SK-N-SH (cell line): ENCODE measurements at regions of chr5 and their contacts with region 1.

Region 1: DNA sequence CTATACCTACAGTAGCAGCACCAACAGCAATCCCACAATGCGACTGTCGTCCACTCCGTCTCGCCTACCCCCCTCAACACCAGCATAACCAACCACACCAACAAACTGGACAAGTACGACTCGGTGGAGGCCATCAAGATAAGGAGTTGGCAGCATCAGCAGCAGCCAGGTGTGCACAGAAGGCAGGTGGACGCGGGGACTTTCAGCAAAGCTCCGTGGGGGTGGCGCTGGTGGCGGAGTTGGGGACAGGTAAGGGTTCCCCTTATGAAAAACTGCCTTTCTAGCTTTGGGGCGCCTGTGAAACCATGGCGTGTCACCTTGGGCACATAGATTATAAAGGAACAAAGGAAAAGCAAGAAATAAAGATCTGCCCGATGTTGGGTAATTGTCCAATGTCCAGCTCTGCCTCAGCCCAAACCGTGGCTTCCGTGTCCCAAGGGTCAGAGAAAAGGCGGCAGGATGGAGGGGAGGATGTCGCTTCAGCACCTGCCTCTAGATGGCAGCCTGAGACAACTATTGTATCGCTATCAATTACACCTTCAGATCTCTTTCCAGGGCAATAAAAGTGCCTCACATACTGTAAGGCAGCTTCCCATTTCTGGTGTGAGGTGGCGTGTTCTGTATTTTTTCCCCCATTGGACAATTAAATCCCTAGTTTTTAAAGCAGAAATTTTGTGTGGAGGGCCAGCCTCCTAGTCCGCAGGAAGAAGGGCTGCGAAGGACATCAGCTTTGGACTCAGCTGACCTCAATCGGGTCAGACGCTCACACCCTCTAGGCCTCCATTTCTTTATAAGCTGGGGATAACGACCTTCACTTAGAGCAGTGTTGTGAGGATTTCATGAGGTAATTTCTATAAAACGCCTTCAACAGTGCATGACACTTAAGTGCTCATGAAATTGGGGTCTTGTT is 58.8 kb downstream of the MTRR start:
- DNase-seq: peak; percentile 68
- H3K4me3 ChIP-seq: peak overlapping the region in 1 of 2 experiments; percentile 40; a peak in 1 of 4 replicates
- H3K27ac ChIP-seq: no peak overlapping the region
- H3K4me1 ChIP-seq: no peaks in the 10 kb centered on the region; a peak in 1 of 4 replicates
- H3K27me3 ChIP-seq: peaks cover 27% of the 10 kb centered on the region; the same call in 1 of the 2 replicates
- CTCF ChIP-seq: peak; percentile 79
- EP300 ChIP-seq: no peak
- RAD21 ChIP-seq: peak; percentile 88

Region 2: GRCh38 chr5:7917130-7918123 is 10.3 kb before region 1 on chr5:
- CTCF ChIA-PET with region 1: interaction called, 11 read pairs
- POLR2A ChIA-PET with region 1: no interaction called
- DNase-seq: no peak
- H3K4me3 ChIP-seq: no peak overlapping the region
- H3K27ac ChIP-seq: no peak overlapping the region
- H3K4me1 ChIP-seq: no peaks in the 10 kb centered on the region
- H3K27me3 ChIP-seq: no peaks in the 10 kb centered on the region
- CTCF ChIP-seq: no peak
- EP300 ChIP-seq: no peak
- RAD21 ChIP-seq: no peak

Region 3: DNA sequence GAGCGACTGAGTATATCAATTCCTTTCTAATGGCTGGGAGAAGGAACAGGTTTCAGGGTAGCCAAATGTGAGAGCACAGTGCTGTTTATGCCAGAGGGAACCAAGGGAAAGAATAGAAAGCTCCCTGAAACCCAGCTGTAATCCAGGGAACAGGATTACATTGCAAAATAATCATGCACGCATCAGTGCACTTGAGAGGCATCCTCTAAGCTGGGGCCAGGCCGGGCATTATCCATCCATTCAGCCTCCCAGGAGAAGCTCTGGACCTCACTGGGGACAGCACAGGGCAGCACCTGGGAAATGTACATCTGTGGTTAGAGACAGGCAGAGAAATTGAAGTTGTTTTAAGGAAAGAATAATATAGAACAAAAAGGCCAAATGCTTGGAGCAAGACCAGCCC is 14.0 kb after region 1 on chr5:
- CTCF ChIA-PET with region 1: interaction called, 37 read pairs
- POLR2A ChIA-PET with region 1: no interaction called
- DNase-seq: no peak
- H3K4me3 ChIP-seq: no peak overlapping the region
- H3K27ac ChIP-seq: no peak overlapping the region
- H3K4me1 ChIP-seq: no peaks in the 10 kb centered on the region
- H3K27me3 ChIP-seq: peaks cover 7% of the 10 kb centered on the region
- CTCF ChIP-seq: no peak
- EP300 ChIP-seq: no peak
- RAD21 ChIP-seq: no peak